Natural killer cell (primary cell): ENCODE measurements at regions of chr6 and their contacts with region 1.

Region 1: GRCh38 chr6:31197559-31198305 is 27.2 kb upstream of the POU5F1 start:
- DNase-seq: peak; percentile 89 to 96
- ATAC-seq: peak; percentile 78 to 91 (median 84)
- H3K4me3 ChIP-seq: peak overlapping the region; percentile 100
- H3K4me3 Mint-ChIP-seq: peak overlapping the region; percentile 94
- H3K27ac ChIP-seq: peak overlapping the region; percentile 100
- H3K27ac Mint-ChIP-seq: peak overlapping the region; percentile 93 to 94
- H3K4me1 ChIP-seq: peaks cover 55% of the 10 kb centered on the region
- H3K4me1 Mint-ChIP-seq: peaks cover 41 to 63% of the 10 kb centered on the region in 2 donors
- H3K27me3 ChIP-seq: no peaks in the 10 kb centered on the region
- H3K27me3 Mint-ChIP-seq: no peaks in the 10 kb centered on the region
- CTCF ChIP-seq: no peak

Region 2: DNA sequence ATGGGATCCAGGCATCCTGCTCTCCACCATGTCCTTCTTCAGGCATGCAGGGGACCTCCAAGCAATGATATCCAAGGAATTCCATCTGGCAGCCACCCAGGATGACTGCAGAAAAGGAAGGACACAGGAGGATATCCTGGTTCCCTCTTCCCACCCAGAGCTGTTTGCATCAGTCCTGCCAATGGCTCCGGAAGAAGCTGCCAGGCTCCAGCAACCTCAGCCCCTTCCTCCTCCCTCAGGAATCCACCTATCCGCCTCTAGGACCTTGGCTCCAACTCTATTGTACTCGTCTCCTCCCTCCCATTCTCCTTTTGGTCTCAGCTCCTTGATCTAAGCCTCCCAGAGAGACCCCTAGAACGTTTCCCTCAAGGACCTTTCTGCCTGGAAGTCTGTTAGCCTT is 58.1 kb before region 1 on chr6:
- intact Hi-C with region 1: loop called (anchors 1 kb)
- DNase-seq: no peak
- ATAC-seq: no peak
- H3K4me3 ChIP-seq: no peak overlapping the region
- H3K4me3 Mint-ChIP-seq: no peak overlapping the region
- H3K27ac ChIP-seq: no peak overlapping the region
- H3K27ac Mint-ChIP-seq: no peak overlapping the region
- H3K4me1 ChIP-seq: peaks cover 6% of the 10 kb centered on the region
- H3K4me1 Mint-ChIP-seq: peaks cover 5 to 6% of the 10 kb centered on the region in 2 donors
- H3K27me3 ChIP-seq: no peaks in the 10 kb centered on the region
- H3K27me3 Mint-ChIP-seq: peaks cover 0 to 3% of the 10 kb centered on the region in 2 donors
- CTCF ChIP-seq: no peak

Region 3: GRCh38 chr6:31158140-31158862 is 39.4 kb before region 1 on chr6 and contains the start of gene TCF19:
- intact Hi-C with region 1: loop called (anchors 2 kb)
- DNase-seq: peak; percentile 94 to 100
- ATAC-seq: peak; percentile 90 to 96 (median 93)
- H3K4me3 ChIP-seq: peak within 1 kb of the TSS; percentile 77
- H3K4me3 Mint-ChIP-seq: peak within 1 kb of the TSS; percentile 98
- H3K27ac ChIP-seq: peak within 1 kb of the TSS; percentile 65
- H3K27ac Mint-ChIP-seq: peak within 1 kb of the TSS; percentile 85 to 87
- H3K4me1 ChIP-seq: peaks cover 20% of the 10 kb centered on the region
- H3K4me1 Mint-ChIP-seq: peaks cover 25 to 26% of the 10 kb centered on the region in 2 donors
- H3K27me3 ChIP-seq: no peaks in the 10 kb centered on the region
- H3K27me3 Mint-ChIP-seq: no peaks in the 10 kb centered on the region
- CTCF ChIP-seq: no peak
- total RNA-seq, gene TCF19: 7.2 to 12.0 (median 9.2) TPM

Region 4: GRCh38 chr6:31216208-31216898 is 18.6 kb after region 1 on chr6:
- intact Hi-C with region 1: loop called (anchors 1 kb)
- DNase-seq: no peak
- ATAC-seq: peak in 2 of 3 donors; percentile 18 to 56
- H3K4me3 ChIP-seq: no peak overlapping the region
- H3K4me3 Mint-ChIP-seq: no peak overlapping the region
- H3K27ac ChIP-seq: peak overlapping the region; percentile 25
- H3K27ac Mint-ChIP-seq: no peak overlapping the region
- H3K4me1 ChIP-seq: no peaks in the 10 kb centered on the region
- H3K4me1 Mint-ChIP-seq: peaks cover 0 to 5% of the 10 kb centered on the region in 2 donors
- H3K27me3 ChIP-seq: no peaks in the 10 kb centered on the region
- H3K27me3 Mint-ChIP-seq: peaks cover 3 to 6% of the 10 kb centered on the region in 2 donors
- CTCF ChIP-seq: no peak

Region 5: DNA sequence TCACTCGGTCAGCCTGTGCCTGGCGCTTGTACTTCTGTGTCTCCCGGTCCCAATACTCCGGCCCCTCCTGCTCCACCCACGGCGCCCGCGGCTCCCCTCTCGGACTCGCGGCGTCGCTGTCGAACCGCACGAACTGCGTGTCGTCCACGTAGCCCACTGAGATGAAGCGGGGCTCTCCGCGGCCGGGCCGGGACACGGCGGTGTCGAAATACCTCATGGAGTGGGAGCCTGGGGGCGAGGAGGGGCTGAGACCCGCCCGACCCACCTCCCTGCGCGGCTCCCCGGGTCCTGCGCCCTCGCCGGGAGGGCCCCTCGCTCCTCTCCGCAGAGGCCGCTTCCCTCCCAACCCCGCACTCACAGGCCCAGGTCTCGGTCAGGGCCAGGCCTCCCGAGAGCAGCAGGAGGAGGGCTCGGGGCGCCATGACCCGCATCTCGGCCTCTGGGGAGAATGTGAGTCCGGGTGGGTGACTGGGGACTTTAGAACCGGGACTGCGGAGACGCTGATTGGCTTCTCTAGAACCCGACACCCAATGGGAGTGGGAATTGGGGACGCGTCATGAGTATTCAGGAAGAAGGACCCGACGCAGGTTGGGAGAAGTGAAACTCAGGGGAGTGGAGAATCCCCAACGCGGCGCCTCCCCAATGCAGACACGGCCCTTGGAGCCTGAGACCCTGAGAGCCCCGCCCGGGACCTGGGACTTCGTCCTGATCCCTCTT is 74.1 kb after region 1 on chr6 and contains the start of gene HLA-C:
- intact Hi-C with region 1: loop called (anchors 1 kb)
- DNase-seq: peak; percentile 86 to 98
- ATAC-seq: peak; percentile 78 to 88 (median 81)
- H3K4me3 ChIP-seq: peak within 1 kb of the TSS; percentile 74
- H3K4me3 Mint-ChIP-seq: peak within 1 kb of the TSS; percentile 97
- H3K27ac ChIP-seq: peak within 1 kb of the TSS; percentile 99
- H3K27ac Mint-ChIP-seq: peak within 1 kb of the TSS; percentile 99 to 100
- H3K4me1 ChIP-seq: peaks cover 44% of the 10 kb centered on the region
- H3K4me1 Mint-ChIP-seq: peaks cover 71 to 78% of the 10 kb centered on the region in 2 donors
- H3K27me3 ChIP-seq: no peaks in the 10 kb centered on the region
- H3K27me3 Mint-ChIP-seq: peaks cover 3 to 7% of the 10 kb centered on the region in 2 donors
- CTCF ChIP-seq: no peak
- total RNA-seq, gene HLA-C: 2,828 to 3,894 (median 3,245) TPM

Region 6: GRCh38 chr6:31356946-31357466 is 159.3 kb after region 1 on chr6 and contains the start of gene HLA-B:
- intact Hi-C with region 1: loop called (anchors 1 kb)
- DNase-seq: peak; percentile 83 to 96
- ATAC-seq: peak; percentile 73 to 88 (median 81)
- H3K4me3 ChIP-seq: peak within 1 kb of the TSS; percentile 99
- H3K4me3 Mint-ChIP-seq: peak within 1 kb of the TSS; percentile 97
- H3K27ac ChIP-seq: peak within 1 kb of the TSS; percentile 100
- H3K27ac Mint-ChIP-seq: peak within 1 kb of the TSS; percentile 100
- H3K4me1 ChIP-seq: peaks cover 50% of the 10 kb centered on the region
- H3K4me1 Mint-ChIP-seq: peaks cover 61 to 68% of the 10 kb centered on the region in 2 donors
- H3K27me3 ChIP-seq: no peaks in the 10 kb centered on the region
- H3K27me3 Mint-ChIP-seq: peaks cover 6 to 15% of the 10 kb centered on the region in 2 donors
- CTCF ChIP-seq: no peak
- total RNA-seq, gene HLA-B: 9,586 to 11,061 (median 11,048) TPM

Region 7: DNA sequence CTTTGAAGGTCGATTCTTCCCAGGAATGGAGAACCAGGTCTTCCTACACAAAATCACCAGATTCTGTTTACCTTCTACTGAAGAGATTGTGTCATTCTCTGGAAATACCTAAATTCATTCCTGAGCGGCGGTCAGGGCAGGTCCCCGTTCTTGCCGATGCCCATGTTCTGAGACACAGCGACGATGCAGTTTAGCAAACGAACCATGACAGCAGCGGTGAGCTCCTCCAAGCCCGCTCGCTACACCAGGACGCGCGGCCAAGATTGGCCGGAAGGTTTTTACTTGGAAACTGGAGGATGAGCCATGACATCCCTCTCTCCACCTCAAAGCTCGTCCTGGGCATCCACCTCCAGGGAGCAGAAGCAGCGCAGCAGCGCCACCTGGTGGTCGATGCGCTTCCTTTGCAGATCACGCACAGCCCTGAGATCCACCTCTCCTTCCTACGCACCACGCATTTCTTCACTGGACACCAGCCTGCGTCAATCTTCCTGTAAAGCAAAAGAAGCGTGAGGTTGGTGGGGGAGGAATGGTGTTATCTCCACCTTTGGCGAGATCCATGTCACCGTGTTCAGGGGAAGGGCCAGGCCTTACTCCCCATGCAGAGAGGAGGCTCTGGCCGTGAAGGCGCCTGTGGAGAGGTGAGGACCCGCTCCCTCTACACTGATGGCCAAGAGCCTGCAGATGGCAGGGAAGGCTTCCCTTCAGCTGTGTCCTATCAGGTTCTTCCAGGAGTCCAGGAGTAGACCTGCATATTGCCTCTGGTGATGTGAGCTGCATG is 169.2 kb after region 1 on chr6:
- intact Hi-C with region 1: loop called (anchors 1 kb)
- DNase-seq: peak; percentile 72 to 98
- ATAC-seq: peak; percentile 97 to 99 (median 98)
- H3K4me3 ChIP-seq: peak overlapping the region; percentile 38
- H3K4me3 Mint-ChIP-seq: peak overlapping the region; percentile 80
- H3K27ac ChIP-seq: no peak overlapping the region
- H3K27ac Mint-ChIP-seq: peak overlapping the region in 1 of 2 donors; percentile 77
- H3K4me1 ChIP-seq: peaks cover 9% of the 10 kb centered on the region
- H3K4me1 Mint-ChIP-seq: peaks cover 8% of the 10 kb centered on the region in 2 donors
- H3K27me3 ChIP-seq: peaks cover 4% of the 10 kb centered on the region
- H3K27me3 Mint-ChIP-seq: peaks cover 51 to 71% of the 10 kb centered on the region in 2 donors
- CTCF ChIP-seq: peak; percentile 87